ENCODE measurements at regions of chr6 and their contacts with region 1.

Region 1: GRCh38 chr6:109705258-109705657 is 14.2 kb downstream of the FIG4 start:
- DNase-seq: peak; percentile 59
- ATAC-seq: peak; percentile 99
- H3K4me3 ChIP-seq: no peak overlapping the region
- H3K27ac ChIP-seq: no peak overlapping the region
- H3K4me1 ChIP-seq: no peaks in the 10 kb centered on the region; the same call in 1 of the 2 replicates
- H3K27me3 ChIP-seq: no peaks in the 10 kb centered on the region
- CTCF ChIP-seq: peak; percentile 89 to 100 (median 99); a peak in 5 of 6 replicates
- EP300 ChIP-seq: no peak
- POLR2A ChIP-seq: no peak
- RAD21 ChIP-seq: peak; percentile 98

Region 2: DNA sequence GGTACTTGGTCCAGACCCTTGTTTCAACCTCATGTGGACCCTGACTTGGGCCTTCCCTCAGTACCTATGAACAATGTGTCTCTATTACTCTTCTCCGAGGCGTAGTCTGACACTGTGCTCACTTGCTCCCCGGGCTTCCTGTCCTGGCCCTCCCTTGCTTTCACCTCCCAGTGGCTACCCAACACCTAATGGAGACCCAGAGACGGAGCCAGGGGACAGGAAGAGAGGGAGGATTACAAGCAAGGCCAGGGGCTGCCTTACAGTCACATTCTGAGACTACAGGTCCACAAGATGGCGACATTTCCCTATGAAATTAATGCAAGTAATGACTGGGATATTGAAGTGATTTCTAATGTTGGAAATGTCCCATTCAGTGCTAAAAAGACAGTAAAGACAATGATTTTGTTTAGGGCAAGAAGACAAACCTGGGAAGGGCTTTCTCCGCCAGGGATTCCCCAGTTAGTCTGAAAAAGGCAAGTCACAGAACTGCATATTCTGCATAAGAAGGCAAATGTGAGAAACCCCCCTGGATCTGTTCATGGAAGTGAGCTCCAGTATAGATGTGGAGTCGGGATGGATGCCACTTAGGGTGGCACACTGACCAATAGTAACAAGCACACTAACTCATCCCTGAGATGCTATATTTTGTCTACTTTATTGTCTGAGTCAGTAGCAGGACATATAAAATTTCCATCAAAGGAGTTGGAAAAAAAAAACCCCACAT is 178.2 kb before region 1 on chr6:
- CTCF ChIA-PET with region 1: interaction called, 3 read pairs
- POLR2A ChIA-PET with region 1: no interaction called
- RAD21 ChIA-PET with region 1: interaction called, 5 read pairs
- SMC1A ChIA-PET with region 1: interaction called, 3 read pairs
- in situ Hi-C with region 1: no loop called
- intact Hi-C with region 1: loop called (anchors 2 kb)
- DNase-seq: peak; percentile 28
- ATAC-seq: peak; percentile 97
- H3K4me3 ChIP-seq: no peak overlapping the region
- H3K27ac ChIP-seq: no peak overlapping the region
- H3K4me1 ChIP-seq: no peaks in the 10 kb centered on the region
- H3K27me3 ChIP-seq: no peaks in the 10 kb centered on the region
- CTCF ChIP-seq: peak; percentile 54 to 80 (median 67)
- EP300 ChIP-seq: no peak
- POLR2A ChIP-seq: no peak
- RAD21 ChIP-seq: peak; percentile 79

Region 3: GRCh38 chr6:109690737-109691621 is 14.3 kb before region 1 on chr6 and contains the starts of genes AK9 and FIG4:
- CTCF ChIA-PET with region 1: interaction called, 8 read pairs
- POLR2A ChIA-PET with region 1: no interaction called
- RAD21 ChIA-PET with region 1: interaction called, 9 read pairs
- SMC1A ChIA-PET with region 1: interaction called, 35 read pairs
- in situ Hi-C with region 1: no loop called
- intact Hi-C with region 1: no loop called
- DNase-seq: peak; percentile 61
- ATAC-seq: peak; percentile 97
- H3K4me3 ChIP-seq: peak within 1 kb of the TSS; percentile 91
- H3K27ac ChIP-seq: peak within 1 kb of the TSS; percentile 67
- H3K4me1 ChIP-seq: peaks cover 5% of the 10 kb centered on the region
- H3K27me3 ChIP-seq: no peaks in the 10 kb centered on the region
- CTCF ChIP-seq: peak in 2 of 3 experiments; percentile 16 to 29; a peak in 3 of 6 replicates
- EP300 ChIP-seq: no peak
- POLR2A ChIP-seq: peak; percentile 67
- RAD21 ChIP-seq: peak; percentile 17; the same call in 1 of the 2 replicates
- polyA plus RNA-seq, gene AK9: 4.0 to 5.8 TPM
- polyA plus RNA-seq, gene FIG4: 3.8 to 4.7 TPM

Region 4: GRCh38 chr6:109867009-109867969 is 162.0 kb after region 1 on chr6:
- CTCF ChIA-PET with region 1: interaction called, 16 read pairs
- POLR2A ChIA-PET with region 1: no interaction called
- RAD21 ChIA-PET with region 1: interaction called, 5 read pairs
- SMC1A ChIA-PET with region 1: interaction called, 3 read pairs
- in situ Hi-C with region 1: no loop called
- intact Hi-C with region 1: loop called (anchors 1 kb)
- DNase-seq: no peak
- ATAC-seq: no peak
- H3K4me3 ChIP-seq: no peak overlapping the region
- H3K27ac ChIP-seq: no peak overlapping the region
- H3K4me1 ChIP-seq: no peaks in the 10 kb centered on the region
- H3K27me3 ChIP-seq: no peaks in the 10 kb centered on the region; a peak in 1 of 4 replicates
- CTCF ChIP-seq: no peak
- EP300 ChIP-seq: no peak
- POLR2A ChIP-seq: no peak
- RAD21 ChIP-seq: no peak

Region 5: DNA sequence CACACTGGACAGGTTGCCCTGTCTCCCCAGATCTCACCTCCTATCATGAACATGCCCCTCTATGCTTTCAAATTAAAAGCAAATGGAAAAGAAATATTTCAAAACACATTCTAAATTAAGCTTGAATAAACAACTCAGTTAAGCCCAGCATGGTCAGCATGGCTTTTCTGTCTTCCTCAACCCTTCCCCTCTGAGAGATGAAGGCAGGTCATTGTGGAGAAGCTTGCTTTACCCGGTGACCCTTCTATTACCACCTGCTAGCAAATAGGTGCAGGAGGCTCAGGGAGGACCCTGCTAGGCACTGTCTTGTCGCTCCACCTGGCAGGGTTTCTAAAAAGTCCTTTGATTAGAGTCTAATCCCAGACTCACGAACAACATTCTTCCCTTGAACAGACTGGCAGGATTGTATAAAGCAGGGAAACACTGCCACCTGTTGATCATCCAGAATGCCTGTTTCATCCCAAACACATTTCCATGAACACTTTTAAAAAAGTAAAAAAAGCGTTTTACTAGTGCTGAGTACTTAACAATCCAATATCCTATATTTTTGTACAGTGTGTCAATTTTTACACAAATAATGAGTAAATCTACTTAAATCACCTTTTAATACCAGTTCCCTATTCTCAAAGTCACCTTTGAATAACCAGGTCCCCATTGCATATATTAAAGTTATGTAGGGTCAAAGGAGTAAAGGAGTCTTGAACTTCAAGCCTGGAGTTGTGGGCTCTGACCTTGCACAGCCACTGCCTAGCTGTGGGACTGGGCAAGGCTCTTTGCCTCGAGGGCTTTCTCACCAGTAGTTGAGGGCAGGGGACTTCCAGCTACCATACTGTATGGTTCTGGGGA is 348.4 kb after region 1 on chr6:
- CTCF ChIA-PET with region 1: interaction called, 10 read pairs
- POLR2A ChIA-PET with region 1: no interaction called
- RAD21 ChIA-PET with region 1: interaction called, 4 read pairs
- SMC1A ChIA-PET with region 1: interaction called, 4 read pairs
- in situ Hi-C with region 1: no loop called
- intact Hi-C with region 1: no loop called
- DNase-seq: no peak
- ATAC-seq: peak; percentile 61
- H3K4me3 ChIP-seq: no peak overlapping the region
- H3K27ac ChIP-seq: no peak overlapping the region
- H3K4me1 ChIP-seq: no peaks in the 10 kb centered on the region
- H3K27me3 ChIP-seq: no peaks in the 10 kb centered on the region; a peak in 1 of 4 replicates
- CTCF ChIP-seq: peak; percentile 53 to 69 (median 67); a peak in 5 of 6 replicates
- EP300 ChIP-seq: no peak
- POLR2A ChIP-seq: no peak
- RAD21 ChIP-seq: peak; percentile 61

Region 6: GRCh38 chr6:110389689-110390382 is 684.6 kb after region 1 on chr6:
- CTCF ChIA-PET with region 1: interaction called, 7 read pairs
- POLR2A ChIA-PET with region 1: interaction called, 3 read pairs
- RAD21 ChIA-PET with region 1: interaction called, 6 read pairs
- SMC1A ChIA-PET with region 1: interaction called, 18 read pairs
- in situ Hi-C with region 1: loop called (anchors 5 kb)
- intact Hi-C with region 1: loop called (anchors 1 kb)
- DNase-seq: no peak
- ATAC-seq: no peak
- H3K4me3 ChIP-seq: no peak overlapping the region
- H3K27ac ChIP-seq: no peak overlapping the region
- H3K4me1 ChIP-seq: no peaks in the 10 kb centered on the region
- H3K27me3 ChIP-seq: no peaks in the 10 kb centered on the region
- CTCF ChIP-seq: no peak
- EP300 ChIP-seq: no peak
- POLR2A ChIP-seq: no peak
- RAD21 ChIP-seq: no peak